Ascending aorta (tissue), 2 donors: ENCODE measurements at regions of chr2 and their contacts with region 1.

Region 1: DNA sequence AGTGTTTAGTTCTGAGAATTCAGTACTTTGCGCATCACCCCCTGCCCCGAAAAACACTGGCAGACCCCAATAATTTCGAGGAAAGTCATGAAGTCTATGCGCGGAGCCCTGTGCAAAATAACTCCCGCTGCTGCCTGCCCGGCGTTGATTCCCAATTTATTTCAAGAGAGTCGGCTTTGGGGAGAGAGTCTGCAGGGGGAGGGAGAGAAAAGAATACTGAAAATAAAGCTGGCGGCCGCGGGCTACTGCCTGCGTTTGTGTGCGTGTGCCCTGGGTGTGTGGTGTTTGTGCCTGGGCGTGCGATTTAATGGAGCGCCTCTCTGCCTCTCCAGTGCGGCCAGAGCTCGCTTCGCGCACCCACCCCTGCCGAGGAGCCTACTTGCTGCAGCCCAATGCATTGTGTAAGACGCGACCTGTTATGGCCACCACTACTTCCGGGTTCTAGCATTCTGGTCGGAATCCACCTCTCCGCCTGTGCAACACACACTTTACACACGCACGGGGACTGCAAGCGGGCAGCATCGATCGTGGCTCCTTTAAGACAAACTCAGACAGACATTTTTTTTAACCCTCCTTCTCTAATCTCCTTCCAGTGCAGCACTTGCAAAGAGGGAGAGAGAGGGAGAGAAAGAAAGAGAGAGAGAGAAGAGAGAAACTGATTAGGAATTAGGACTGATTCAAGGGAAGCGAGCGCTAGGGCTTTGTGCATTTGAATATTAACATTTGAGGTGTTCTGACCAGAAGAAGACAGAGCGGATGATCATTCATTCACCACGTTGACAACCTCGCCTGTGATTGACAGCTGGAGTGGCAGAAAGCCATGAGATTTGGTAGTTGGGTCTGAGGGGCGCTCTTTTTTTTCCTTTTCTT is at the start of gene MEIS1:
- DNase-seq: peak; percentile 83 to 97
- H3K4me3 ChIP-seq: peak within 1 kb of the TSS; percentile 81 to 82
- H3K27ac ChIP-seq: peak within 1 kb of the TSS; percentile 85 to 91
- H3K4me1 ChIP-seq: no peaks in the 10 kb centered on the region
- H3K27me3 ChIP-seq: no peaks in the 10 kb centered on the region
- CTCF ChIP-seq: no peak
- total RNA-seq, gene MEIS1: 46.7 TPM

Region 2: DNA sequence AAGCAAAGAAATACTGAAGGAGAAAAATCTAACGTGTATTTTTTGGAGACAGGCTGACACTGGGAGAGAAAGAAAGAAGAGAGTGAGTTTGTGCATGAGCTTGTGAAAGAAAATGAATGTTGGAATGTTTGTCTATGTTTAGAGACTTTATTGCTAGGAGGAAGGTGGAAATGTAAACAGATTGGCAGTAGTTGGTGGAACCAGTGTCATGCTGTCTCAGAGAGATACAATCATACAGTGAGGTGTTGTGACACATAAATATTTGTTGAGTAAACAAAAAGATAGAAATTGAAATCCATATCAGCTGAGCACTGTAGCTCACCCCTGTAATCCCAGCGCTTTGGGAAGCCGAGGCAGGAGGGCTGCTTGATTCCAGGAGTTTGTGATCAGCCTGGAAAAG is 222.1 kb before region 1 on chr2:
- intact Hi-C with region 1: no loop called
- DNase-seq: no peak
- H3K4me3 ChIP-seq: no peak overlapping the region
- H3K27ac ChIP-seq: no peak overlapping the region
- H3K4me1 ChIP-seq: no peaks in the 10 kb centered on the region
- H3K27me3 ChIP-seq: no peaks in the 10 kb centered on the region
- CTCF ChIP-seq: no peak

Region 3: GRCh38 chr2:66495788-66496640 is 61.1 kb after region 1 on chr2:
- intact Hi-C with region 1: loop called (anchors 2 kb)
- DNase-seq: peak; percentile 21 to 89
- H3K4me3 ChIP-seq: peak overlapping the region; percentile 18 to 23
- H3K27ac ChIP-seq: peak overlapping the region; percentile 68 to 70
- H3K4me1 ChIP-seq: peaks cover 11 to 34% of the 10 kb centered on the region in 2 donors
- H3K27me3 ChIP-seq: no peaks in the 10 kb centered on the region
- CTCF ChIP-seq: peak; percentile 26 to 40 (median 27)

Region 4: GRCh38 chr2:66691031-66691507 is 256.2 kb after region 1 on chr2:
- intact Hi-C with region 1: loop called (anchors 5 kb)
- DNase-seq: no peak
- H3K4me3 ChIP-seq: peak overlapping the region; percentile 37 to 42
- H3K27ac ChIP-seq: peak overlapping the region in 1 of 2 donors; percentile 34
- H3K4me1 ChIP-seq: no peaks in the 10 kb centered on the region
- H3K27me3 ChIP-seq: no peaks in the 10 kb centered on the region
- CTCF ChIP-seq: no peak

Region 5: DNA sequence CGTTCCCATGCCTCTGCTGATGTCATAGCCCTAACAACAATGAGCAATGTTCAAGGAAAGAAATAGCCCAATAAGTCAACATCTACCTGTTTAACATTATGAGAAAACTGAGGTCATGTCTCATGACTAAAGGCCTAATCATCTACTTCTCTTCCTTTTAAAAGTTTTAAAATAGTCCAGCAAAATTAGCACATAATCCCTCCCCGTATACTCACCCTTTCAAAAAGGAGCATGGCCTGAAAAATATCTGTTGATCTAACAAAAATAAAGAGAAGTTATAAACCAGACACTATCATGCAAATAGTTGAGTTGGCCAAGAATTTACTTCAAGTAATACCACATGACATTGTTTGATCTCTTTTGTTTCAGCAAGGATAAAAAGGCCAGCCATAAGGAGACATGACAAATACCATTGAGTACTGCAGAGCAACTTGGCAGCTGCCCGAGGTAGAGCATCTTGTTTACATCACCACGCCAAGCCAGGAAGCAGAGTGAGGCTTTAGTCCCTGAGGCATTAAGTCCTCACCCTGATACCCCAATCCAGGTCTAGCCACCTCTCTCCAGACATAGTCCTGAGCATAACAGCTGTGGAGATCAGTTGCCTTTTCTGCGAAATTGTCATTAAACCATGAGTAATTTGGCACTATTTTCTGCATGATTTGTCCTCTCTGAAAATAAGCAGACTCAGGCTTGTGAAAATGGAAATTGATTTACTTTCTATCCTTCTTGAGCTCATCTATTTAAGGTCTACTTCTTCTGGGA is 824.8 kb after region 1 on chr2:
- intact Hi-C with region 1: loop called (anchors 10 kb)
- DNase-seq: peak in 1 of 2 donors; percentile 64
- H3K4me3 ChIP-seq: no peak overlapping the region
- H3K27ac ChIP-seq: peak overlapping the region; percentile 83 to 90
- H3K4me1 ChIP-seq: peaks cover 0 to 12% of the 10 kb centered on the region in 2 donors
- H3K27me3 ChIP-seq: no peaks in the 10 kb centered on the region
- CTCF ChIP-seq: no peak

Region 6: GRCh38 chr2:67397143-67397986 is 962.5 kb after region 1 on chr2 and contains the start of gene ETAA1:
- intact Hi-C with region 1: loop called (anchors 5 kb)
- DNase-seq: peak; percentile 58 to 95
- H3K4me3 ChIP-seq: peak within 1 kb of the TSS; percentile 73 to 89
- H3K27ac ChIP-seq: peak within 1 kb of the TSS; percentile 90
- H3K4me1 ChIP-seq: peaks cover 0 to 28% of the 10 kb centered on the region in 2 donors
- H3K27me3 ChIP-seq: no peaks in the 10 kb centered on the region
- CTCF ChIP-seq: no peak
- total RNA-seq, gene ETAA1: 5.4 TPM

Region 7: DNA sequence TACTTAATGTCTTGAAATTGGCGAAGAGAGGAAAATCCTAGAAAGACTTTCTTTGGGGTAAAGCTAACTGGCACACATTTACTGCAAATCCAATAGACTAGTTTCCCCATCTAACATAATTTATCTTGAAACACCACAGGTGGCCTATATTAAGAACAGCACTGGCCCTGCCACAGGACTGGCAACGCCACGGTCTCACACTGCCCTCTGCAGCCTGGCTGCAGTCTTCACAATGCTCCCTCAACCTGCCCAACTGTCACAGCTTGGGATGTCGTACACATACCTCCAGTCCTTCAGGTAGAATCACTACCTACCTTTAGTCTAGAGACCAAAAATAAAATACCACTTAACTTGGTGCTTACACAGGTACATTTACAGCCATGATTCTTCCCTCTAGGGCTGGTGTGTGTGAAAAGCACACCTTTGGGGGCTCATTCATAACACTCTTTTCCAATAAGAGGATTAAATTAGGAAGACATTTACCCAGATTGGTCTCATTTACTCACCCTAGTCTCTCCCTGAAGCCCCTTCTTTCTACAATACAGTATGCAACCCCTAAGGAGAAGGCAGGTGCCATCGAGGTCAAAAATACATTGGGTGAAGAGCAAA is 1405.7 kb after region 1 on chr2:
- intact Hi-C with region 1: loop called (anchors 5 kb)
- DNase-seq: peak in 1 of 2 donors; percentile 72
- H3K4me3 ChIP-seq: no peak overlapping the region
- H3K27ac ChIP-seq: no peak overlapping the region
- H3K4me1 ChIP-seq: no peaks in the 10 kb centered on the region
- H3K27me3 ChIP-seq: no peaks in the 10 kb centered on the region
- CTCF ChIP-seq: peak; percentile 67 to 88 (median 77)

Region 8: GRCh38 chr2:68251187-68251854 is 1816.4 kb after region 1 on chr2:
- intact Hi-C with region 1: loop called (anchors 5 kb)
- DNase-seq: peak in 1 of 2 donors; percentile 80
- H3K4me3 ChIP-seq: peak overlapping the region; percentile 91 to 99
- H3K27ac ChIP-seq: peak overlapping the region; percentile 97 to 100
- H3K4me1 ChIP-seq: peaks cover 3 to 44% of the 10 kb centered on the region in 2 donors
- H3K27me3 ChIP-seq: no peaks in the 10 kb centered on the region
- CTCF ChIP-seq: peak; percentile 32 to 76 (median 66)